Activated CD8-positive, alpha-beta T cell treated with anti-CD3 and anti-CD28 coated beads for 36 hours (primary cell): ENCODE measurements at regions of chr20 and their contacts with region 1.

Region 1: DNA sequence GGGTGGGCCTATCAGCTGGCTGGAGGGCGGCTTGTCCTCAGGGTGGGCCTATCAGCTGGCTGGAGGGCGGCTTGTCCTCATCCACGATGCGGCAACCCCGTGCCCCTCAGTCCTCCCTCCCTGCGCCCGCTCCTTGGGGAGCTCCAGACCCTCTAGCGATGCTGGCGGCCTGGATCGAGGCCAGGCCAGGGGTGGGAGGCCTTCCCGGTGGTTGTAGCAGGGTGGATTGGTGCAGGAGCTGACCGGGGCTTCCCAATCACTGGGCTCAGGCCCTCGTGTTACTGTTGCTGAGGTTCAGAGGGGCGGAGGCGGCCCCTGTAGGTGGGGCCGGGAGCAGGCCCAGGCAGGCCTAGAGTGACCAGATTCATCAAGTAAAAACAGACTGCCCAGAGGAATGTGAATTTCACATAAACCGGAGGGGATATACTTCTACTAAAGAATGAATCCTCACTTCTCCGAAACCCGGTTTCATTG is 8.8 kb downstream of the SLC17A9 start:
- DNase-seq: no peak
- ATAC-seq: no peak
- H3K4me3 Mint-ChIP-seq: no peak overlapping the region
- H3K27ac Mint-ChIP-seq: no peak overlapping the region
- H3K4me1 Mint-ChIP-seq: peaks cover 11% of the 10 kb centered on the region
- H3K27me3 Mint-ChIP-seq: no peaks in the 10 kb centered on the region
- CTCF ChIP-seq: no peak

Region 2: DNA sequence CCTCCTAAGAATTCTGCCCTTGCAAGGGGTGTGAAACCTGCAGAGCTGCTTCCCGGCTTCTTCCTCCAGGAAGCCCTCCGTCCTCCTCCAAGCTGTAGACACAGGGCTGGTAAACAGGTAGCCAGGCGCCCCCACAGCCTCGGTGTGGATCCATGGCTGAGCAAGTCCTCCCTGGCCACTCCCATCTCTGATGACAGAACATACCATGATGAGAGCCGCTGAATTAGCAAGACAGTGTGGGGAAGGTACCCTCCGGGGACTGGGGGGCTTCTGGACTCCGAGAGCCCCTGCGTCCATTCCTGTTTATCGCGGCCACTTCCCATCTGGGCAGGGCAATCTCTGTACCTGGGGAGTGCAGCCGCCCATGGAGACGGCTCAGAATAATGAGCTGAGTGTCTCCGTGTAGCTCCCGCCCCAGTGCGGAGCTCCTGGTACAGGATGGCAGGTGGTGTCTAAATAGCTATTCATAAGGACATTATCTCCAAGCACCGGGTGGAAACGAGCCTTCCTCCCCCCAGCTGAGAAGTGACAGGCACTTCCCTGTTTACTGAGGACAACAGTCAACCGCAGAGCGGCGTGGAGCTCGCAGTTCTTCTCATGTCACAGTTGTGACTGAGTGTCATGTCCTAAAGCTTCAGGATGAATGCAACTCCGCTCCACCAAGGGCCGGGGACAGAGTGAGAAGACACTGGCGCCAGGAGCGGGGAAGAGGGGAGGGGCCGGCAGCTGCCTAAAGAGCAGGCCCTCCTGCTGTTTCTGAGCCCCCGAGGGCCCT is 275.4 kb before region 1 on chr20:
- CTCF ChIA-PET with region 1: no interaction called
- POLR2A ChIA-PET with region 1: no interaction called
- intact Hi-C with region 1: no loop called
- DNase-seq: peak; percentile 26
- ATAC-seq: peak; percentile 49
- H3K4me3 Mint-ChIP-seq: no peak overlapping the region
- H3K27ac Mint-ChIP-seq: no peak overlapping the region
- H3K4me1 Mint-ChIP-seq: peaks cover 4% of the 10 kb centered on the region
- H3K27me3 Mint-ChIP-seq: peaks cover 13% of the 10 kb centered on the region
- CTCF ChIP-seq: no peak

Region 3: GRCh38 chr20:62768481-62769287 is 192.7 kb before region 1 on chr20:
- CTCF ChIA-PET with region 1: no interaction called
- POLR2A ChIA-PET with region 1: no interaction called
- intact Hi-C with region 1: no loop called
- DNase-seq: no peak
- ATAC-seq: no peak
- H3K4me3 Mint-ChIP-seq: no peak overlapping the region
- H3K27ac Mint-ChIP-seq: no peak overlapping the region
- H3K4me1 Mint-ChIP-seq: peaks cover 27% of the 10 kb centered on the region
- H3K27me3 Mint-ChIP-seq: no peaks in the 10 kb centered on the region
- CTCF ChIP-seq: no peak

Region 4: DNA sequence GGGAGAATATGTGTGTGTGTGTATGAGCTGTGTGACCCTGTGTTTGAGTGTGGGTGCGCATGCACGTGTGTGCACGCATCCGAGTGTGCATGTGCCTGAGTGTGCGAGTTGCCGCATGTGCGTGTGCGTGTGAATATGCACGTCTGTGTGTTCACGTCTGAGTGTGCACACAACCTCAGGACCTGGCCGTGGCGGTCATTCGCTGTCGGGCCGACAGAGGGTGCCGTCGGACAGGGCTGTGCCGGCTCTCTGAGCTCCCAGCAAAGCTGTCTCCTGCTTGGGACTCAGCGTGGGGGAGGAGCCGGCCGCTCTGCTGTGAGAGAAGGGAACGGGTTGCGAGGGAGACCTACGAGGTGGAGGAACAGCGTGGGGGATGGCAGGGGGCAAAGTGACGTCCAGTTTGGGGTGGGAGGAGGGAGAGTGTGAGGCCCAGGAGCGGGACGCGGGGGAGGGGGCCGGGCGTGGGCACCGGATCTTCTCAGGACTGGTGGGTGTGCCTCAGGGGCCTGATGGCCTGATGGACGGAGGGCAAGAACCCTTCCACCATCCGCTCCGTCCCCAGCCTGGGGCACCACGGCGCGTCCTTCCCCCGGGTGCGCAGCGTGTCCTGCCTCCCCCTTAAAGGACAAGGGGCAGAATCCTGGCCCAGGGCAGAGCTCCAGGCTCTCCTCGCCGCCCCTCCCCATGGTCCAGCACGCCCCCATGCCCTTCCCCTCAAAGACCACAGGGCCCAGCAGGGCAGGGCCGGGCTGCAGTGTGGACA is 11.1 kb after region 1 on chr20:
- CTCF ChIA-PET with region 1: interaction called, 13 read pairs
- POLR2A ChIA-PET with region 1: interaction called, 10 read pairs
- intact Hi-C with region 1: no loop called
- DNase-seq: peak; percentile 92
- ATAC-seq: peak; percentile 99
- H3K4me3 Mint-ChIP-seq: no peak overlapping the region
- H3K27ac Mint-ChIP-seq: no peak overlapping the region
- H3K4me1 Mint-ChIP-seq: peaks cover 19% of the 10 kb centered on the region
- H3K27me3 Mint-ChIP-seq: peaks cover 39% of the 10 kb centered on the region
- CTCF ChIP-seq: peak; percentile 66